Right cardiac atrium (tissue), 5 donors: ENCODE measurements at regions of chr9 and their contacts with region 1.

Region 1: DNA sequence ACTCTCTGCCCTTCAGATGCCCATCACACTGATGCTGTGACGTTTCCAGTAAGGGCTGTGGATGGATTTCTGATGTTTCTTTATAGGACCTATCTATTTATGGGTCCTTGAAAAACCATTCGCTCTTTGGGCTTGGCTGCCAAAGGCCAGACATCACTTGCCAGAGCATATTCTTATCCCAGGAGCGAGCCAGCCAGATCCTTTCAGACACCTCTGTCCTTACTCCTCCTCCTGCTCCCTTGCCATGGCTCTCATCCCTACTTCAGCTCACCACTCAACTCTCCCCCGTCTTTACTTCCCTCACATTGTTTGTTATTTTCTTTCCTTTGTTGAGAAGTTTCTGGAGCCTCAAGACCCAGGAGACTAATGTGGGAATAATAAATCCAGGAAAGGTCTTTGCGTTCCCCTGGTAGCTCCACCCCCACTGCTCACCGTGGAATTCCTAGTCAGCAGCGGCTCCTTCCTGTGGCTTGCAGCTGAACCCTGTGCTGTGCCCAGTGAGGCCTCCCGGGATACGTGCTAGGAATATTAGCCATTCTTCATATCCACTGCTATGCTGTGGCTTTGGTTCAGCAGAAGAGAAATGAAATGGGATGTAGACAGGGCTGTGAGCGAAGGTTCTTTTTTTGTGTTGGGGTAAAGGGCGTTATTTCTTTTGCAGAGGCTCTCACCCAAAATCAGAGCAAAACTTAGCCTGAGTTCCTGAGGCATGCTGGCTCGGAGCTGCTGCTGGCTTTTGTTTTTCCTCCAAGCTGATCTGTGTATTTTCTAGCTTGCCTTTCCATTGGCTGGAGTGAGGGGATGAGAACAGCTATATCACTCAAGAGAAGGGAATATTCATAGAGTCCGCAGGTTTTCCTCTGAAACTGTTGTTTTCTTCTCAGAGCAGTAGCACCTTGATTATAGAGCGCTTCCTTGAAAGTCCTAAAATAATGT is 171.1 kb downstream of the SAXO1 start:
- DNase-seq: peak; percentile 49 to 81 (median 79)
- ATAC-seq: peak; percentile 88 to 92
- H3K4me3 ChIP-seq: no peak overlapping the region
- H3K27ac ChIP-seq: no peak overlapping the region
- H3K4me1 ChIP-seq: peaks cover 4% of the 10 kb centered on the region
- H3K27me3 ChIP-seq: no peaks in the 10 kb centered on the region

Region 2: DNA sequence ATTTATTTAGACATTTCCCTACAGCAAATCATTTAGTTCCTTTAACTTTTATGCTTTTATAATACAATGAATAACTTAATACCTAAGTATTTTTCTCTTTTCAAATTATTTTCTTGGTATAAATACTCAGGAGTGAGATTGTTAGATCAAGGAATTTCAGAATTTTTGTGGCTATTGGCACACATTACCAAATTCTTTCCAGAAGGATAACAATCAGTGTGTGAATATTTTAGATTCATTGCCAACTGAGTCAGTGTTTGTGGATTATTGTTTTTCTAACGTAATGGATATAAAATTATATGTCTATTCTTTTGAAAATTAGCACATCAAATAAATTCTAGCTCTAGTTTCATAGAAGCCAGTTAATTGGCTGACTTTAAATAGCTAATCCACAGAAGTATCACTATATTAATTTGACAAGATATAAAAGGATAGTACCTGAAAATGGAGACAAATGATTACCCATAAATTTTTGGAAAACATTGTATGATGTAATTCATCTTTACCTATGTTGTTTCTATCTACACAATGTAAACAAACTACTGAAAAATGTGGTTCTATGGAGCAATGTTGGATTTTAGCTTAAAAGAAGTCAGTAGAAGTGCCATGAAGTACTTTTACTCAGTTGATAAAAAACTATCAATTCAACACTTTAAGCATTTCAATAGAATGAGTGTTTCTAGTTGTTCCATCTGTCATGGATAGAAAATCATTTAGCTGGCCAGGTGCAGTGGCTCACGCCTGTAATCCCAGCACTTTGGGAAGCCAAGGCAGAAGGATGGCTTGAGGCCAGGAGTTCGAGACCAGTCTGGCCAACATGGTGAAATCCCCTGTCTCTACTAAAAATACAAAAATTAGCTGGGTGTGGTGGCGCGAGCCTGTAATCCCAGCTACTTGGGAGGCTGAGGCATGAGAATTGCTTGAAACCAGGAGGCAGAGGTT is 202.8 kb before region 1 on chr9:
- intact Hi-C with region 1: loop called in 1 of 4 experiments (anchors 10 kb)
- DNase-seq: no peak
- ATAC-seq: no peak
- H3K4me3 ChIP-seq: no peak overlapping the region
- H3K27ac ChIP-seq: no peak overlapping the region
- H3K4me1 ChIP-seq: no peaks in the 10 kb centered on the region
- H3K27me3 ChIP-seq: no peaks in the 10 kb centered on the region

Region 3: DNA sequence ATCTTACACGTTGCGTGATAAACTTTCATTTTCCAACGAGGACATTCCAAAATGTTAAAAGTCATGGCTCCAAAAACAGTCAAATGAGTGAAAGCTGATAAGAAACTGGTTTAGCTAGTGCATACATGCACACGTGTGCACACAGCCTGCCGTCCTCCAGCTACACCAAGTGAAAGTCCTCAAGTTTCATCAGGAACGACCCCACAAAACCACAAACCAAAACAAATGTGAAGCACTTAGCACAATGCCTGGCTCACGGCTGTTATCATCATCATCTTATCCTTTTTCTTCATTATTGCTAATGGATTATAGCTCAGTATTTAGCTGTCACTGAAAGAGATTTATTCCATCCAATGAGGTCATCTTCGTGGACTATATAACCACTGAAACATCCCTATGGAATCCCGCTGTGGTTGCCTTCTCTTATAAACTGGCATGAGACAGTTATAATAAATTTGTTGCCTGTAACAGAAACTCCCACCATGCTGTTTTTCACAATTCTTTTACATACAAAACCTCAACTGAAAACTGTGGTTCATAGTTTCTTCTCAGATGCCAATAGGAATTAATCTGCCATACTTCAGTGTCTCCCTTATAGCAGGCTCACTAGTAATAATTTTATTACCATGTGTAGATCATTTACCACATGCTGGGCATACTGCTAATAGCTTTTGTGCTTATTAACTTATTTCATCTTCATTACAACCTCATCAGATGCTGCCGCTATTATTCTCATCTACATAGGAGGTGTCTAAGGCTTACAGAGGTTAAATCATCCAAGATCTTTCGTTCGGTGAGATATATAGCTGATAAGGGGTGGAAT is 115.0 kb after region 1 on chr9:
- intact Hi-C with region 1: loop called in 1 of 4 experiments (anchors 10 kb)
- DNase-seq: no peak
- ATAC-seq: peak in 1 of 2 donors; percentile 21
- H3K4me3 ChIP-seq: peak overlapping the region; percentile 17
- H3K27ac ChIP-seq: no peak overlapping the region
- H3K4me1 ChIP-seq: no peaks in the 10 kb centered on the region
- H3K27me3 ChIP-seq: no peaks in the 10 kb centered on the region